ENCODE measurements at regions of chr20 and their contacts with region 1.

Region 1: GRCh38 chr20:35063168-35063567 is 29.4 kb downstream of the TRPC4AP start:
- DNase-seq: no peak
- H3K4me3 ChIP-seq: no peak overlapping the region
- H3K27ac ChIP-seq: no peak overlapping the region
- H3K4me1 ChIP-seq: peaks cover 0 to 19% (median 2%) of the 10 kb centered on the region in 4 donors
- H3K27me3 ChIP-seq: no peaks in the 10 kb centered on the region
- CTCF ChIP-seq: no peak
- EP300 ChIP-seq: no peak
- POLR2A ChIP-seq: no peak

Region 2: GRCh38 chr20:35329435-35330139 is 266.4 kb after region 1 on chr20:
- in situ Hi-C with region 1: no loop called
- intact Hi-C with region 1: loop called (anchors 5 kb)
- DNase-seq: peak; percentile 58
- H3K4me3 ChIP-seq: no peak overlapping the region
- H3K27ac ChIP-seq: no peak overlapping the region
- H3K4me1 ChIP-seq: peaks cover 8 to 49% (median 31%) of the 10 kb centered on the region in 4 donors
- H3K27me3 ChIP-seq: no peaks in the 10 kb centered on the region
- CTCF ChIP-seq: peak; percentile 17 to 55 (median 47)
- EP300 ChIP-seq: no peak
- POLR2A ChIP-seq: no peak

Measured in transverse colon (tissue), 4 donors.